ENCODE measurements at regions of chr7 and their contacts with region 1.

Region 1: GRCh38 chr7:37031571-37032257 is 307.4 kb upstream of the AOAH start:
- DNase-seq: peak; percentile 94
- H3K4me3 ChIP-seq: no peak overlapping the region
- H3K27ac ChIP-seq: peak overlapping the region; percentile 80 to 84 (median 83)
- H3K4me1 ChIP-seq: peaks cover 17 to 26% (median 23%) of the 10 kb centered on the region in 4 donors
- H3K27me3 ChIP-seq: no peaks in the 10 kb centered on the region
- CTCF ChIP-seq: no peak
- EP300 ChIP-seq: no peak
- POLR2A ChIP-seq: no peak

Region 2: GRCh38 chr7:36984710-36985313 is 46.9 kb before region 1 on chr7:
- intact Hi-C with region 1: loop called (anchors 5 kb)
- DNase-seq: no peak
- H3K4me3 ChIP-seq: peak overlapping the region in 3 of 4 donors; percentile 22 to 44 (median 36)
- H3K27ac ChIP-seq: peak overlapping the region in 3 of 4 donors; percentile 45 to 70 (median 47)
- H3K4me1 ChIP-seq: peaks cover 11 to 70% (median 58%) of the 10 kb centered on the region in 4 donors
- H3K27me3 ChIP-seq: no peaks in the 10 kb centered on the region
- CTCF ChIP-seq: no peak
- EP300 ChIP-seq: no peak
- POLR2A ChIP-seq: no peak

Region 3: DNA sequence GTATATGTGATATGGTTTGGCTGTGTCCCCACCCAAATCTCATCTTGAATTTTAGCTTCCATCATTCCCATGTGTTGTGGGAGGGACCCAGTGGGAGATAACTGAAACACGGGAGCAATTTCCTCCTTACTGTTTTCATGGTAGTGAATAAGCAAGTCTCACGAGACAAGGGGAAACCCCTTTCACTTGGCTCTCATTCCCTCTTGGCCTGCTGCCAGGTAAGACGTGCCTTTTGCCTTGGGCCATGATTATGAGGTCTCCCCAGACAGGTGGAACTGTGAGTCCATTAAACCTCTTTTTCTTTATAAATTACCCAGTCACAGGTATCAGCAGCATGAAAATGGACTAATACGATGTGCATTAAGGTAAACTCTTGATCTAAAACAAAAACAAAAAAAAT is 49.7 kb after region 1 on chr7:
- intact Hi-C with region 1: loop called (anchors 5 kb)
- DNase-seq: peak; percentile 29
- H3K4me3 ChIP-seq: no peak overlapping the region
- H3K27ac ChIP-seq: no peak overlapping the region
- H3K4me1 ChIP-seq: peaks cover 16 to 46% (median 36%) of the 10 kb centered on the region in 4 donors
- H3K27me3 ChIP-seq: no peaks in the 10 kb centered on the region
- CTCF ChIP-seq: no peak
- EP300 ChIP-seq: no peak
- POLR2A ChIP-seq: no peak